ENCODE measurements at regions of chr10 and their contacts with region 1.

Region 1: DNA sequence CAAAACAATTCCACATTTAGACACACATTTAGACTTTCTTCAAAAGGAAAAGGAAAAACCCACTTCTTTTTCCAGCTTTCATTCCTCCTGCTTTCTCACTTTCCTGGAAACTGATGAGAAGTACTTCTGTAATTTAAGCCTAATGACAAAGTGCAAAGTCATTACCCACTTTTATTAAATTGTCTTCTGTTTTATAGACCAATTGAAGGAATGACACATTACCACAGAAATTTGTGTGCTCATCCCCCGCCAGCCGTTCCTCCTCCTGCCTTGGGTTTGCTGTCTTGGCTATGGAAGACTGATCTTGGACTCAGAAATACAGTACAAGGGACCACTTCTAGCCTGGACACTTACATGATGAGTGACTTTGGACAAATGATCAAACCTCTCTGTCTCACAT is 717.8 kb downstream of the SORCS3 start:
- DNase-seq: no peak
- H3K4me3 ChIP-seq: no peak overlapping the region
- H3K4me3 Mint-ChIP-seq: no peak overlapping the region
- H3K27ac Mint-ChIP-seq: no peak overlapping the region
- H3K4me1 ChIP-seq: no peaks in the 10 kb centered on the region
- H3K4me1 Mint-ChIP-seq: no peaks in the 10 kb centered on the region
- H3K27me3 ChIP-seq: no peaks in the 10 kb centered on the region
- H3K27me3 Mint-ChIP-seq: no peaks in the 10 kb centered on the region
- CTCF ChIP-seq: no peak

Region 2: DNA sequence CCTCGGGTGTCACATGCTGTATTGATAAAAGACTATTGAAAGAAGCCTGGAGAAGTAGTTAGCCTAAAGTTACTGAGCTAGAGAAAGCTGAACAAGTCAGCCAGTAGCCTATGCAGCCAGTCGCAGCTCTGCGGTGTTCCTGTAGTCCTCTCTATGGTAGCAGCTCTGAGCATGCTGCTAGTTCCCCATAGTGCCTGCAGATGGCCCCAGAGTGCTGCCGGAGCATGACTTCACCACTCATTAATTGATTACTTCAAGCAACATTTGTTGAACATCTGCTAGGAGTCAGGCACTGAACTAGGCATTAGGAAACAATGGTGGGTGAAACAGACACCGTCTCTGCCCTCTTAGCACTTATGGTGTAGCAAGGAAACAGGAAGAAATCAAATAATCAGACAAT is 295.1 kb before region 1 on chr10:
- CTCF ChIA-PET with region 1: no interaction called
- POLR2A ChIA-PET with region 1: no interaction called
- intact Hi-C with region 1: loop called (anchors 10 kb)
- DNase-seq: peak; percentile 44 to 55
- H3K4me3 ChIP-seq: no peak overlapping the region
- H3K4me3 Mint-ChIP-seq: no peak overlapping the region
- H3K27ac Mint-ChIP-seq: no peak overlapping the region
- H3K4me1 ChIP-seq: no peaks in the 10 kb centered on the region
- H3K4me1 Mint-ChIP-seq: no peaks in the 10 kb centered on the region
- H3K27me3 ChIP-seq: no peaks in the 10 kb centered on the region
- H3K27me3 Mint-ChIP-seq: peaks cover 7% of the 10 kb centered on the region
- CTCF ChIP-seq: peak; percentile 64 to 75

Region 3: GRCh38 chr10:105494303-105494702 is 135.4 kb after region 1 on chr10:
- CTCF ChIA-PET with region 1: no interaction called
- POLR2A ChIA-PET with region 1: no interaction called
- intact Hi-C with region 1: no loop called
- DNase-seq: no peak
- H3K4me3 ChIP-seq: no peak overlapping the region
- H3K4me3 Mint-ChIP-seq: no peak overlapping the region
- H3K27ac Mint-ChIP-seq: no peak overlapping the region
- H3K4me1 ChIP-seq: no peaks in the 10 kb centered on the region
- H3K4me1 Mint-ChIP-seq: no peaks in the 10 kb centered on the region
- H3K27me3 ChIP-seq: no peaks in the 10 kb centered on the region
- H3K27me3 Mint-ChIP-seq: no peaks in the 10 kb centered on the region
- CTCF ChIP-seq: no peak

Region 4: GRCh38 chr10:105974803-105975456 is 616.0 kb after region 1 on chr10:
- CTCF ChIA-PET with region 1: no interaction called
- POLR2A ChIA-PET with region 1: no interaction called
- intact Hi-C with region 1: no loop called
- DNase-seq: peak in 1 of 2 experiments; percentile 25
- H3K4me3 ChIP-seq: no peak overlapping the region
- H3K4me3 Mint-ChIP-seq: no peak overlapping the region
- H3K27ac Mint-ChIP-seq: no peak overlapping the region
- H3K4me1 ChIP-seq: no peaks in the 10 kb centered on the region
- H3K4me1 Mint-ChIP-seq: no peaks in the 10 kb centered on the region
- H3K27me3 ChIP-seq: no peaks in the 10 kb centered on the region
- H3K27me3 Mint-ChIP-seq: peaks cover 2% of the 10 kb centered on the region
- CTCF ChIP-seq: peak; percentile 46 to 72

Measured in Caco-2 (cell line).